Tibial artery (tissue), 4 donors: ENCODE measurements at regions of chr10 and their contacts with region 1.

Region 1: GRCh38 chr10:54444170-54444569 is 356.9 kb downstream of the PCDH15 start:
- DNase-seq: no peak
- H3K4me3 ChIP-seq: no peak overlapping the region
- H3K27ac ChIP-seq: no peak overlapping the region
- H3K4me1 ChIP-seq: no peaks in the 10 kb centered on the region
- H3K27me3 ChIP-seq: no peaks in the 10 kb centered on the region
- CTCF ChIP-seq: no peak

Region 2: DNA sequence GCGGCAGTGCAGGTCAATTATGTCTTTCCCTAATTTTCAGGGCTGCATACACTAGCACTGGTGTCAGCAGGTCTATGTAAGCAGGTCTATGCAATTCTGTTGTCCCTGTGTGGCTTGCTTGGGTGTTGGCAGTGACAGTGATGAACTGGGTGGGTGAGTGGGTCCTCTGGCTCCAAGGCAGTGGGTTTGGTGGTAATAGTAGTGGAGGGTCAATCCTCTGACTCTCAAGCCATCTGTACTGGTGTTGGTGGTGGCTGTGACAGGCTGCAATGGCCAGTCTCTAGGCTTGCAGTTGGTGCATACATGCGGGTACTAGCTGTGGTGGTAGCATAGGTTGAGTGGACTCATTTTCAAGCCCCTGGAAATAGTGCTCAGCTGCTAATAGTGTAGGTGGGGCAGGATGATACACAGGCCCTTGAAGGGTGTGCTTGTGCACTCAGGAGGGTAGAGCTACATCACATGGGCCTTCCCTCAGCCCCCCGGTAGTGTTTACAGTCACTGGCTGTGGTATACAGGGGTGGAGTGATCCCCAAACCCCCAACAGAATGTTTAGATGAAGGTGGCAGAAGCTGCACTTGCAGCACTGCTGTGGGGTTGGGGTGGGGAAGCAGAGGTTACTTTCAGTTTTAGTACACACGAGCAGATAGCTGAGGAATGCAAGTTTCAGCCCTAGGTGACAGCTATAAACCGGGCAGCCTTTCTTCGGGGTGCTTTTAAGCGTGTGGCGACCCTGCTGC is 25.6 kb after region 1 on chr10:
- intact Hi-C with region 1: loop called (anchors 2 kb)
- DNase-seq: no peak
- H3K4me3 ChIP-seq: no peak overlapping the region
- H3K27ac ChIP-seq: no peak overlapping the region
- H3K4me1 ChIP-seq: no peaks in the 10 kb centered on the region
- H3K27me3 ChIP-seq: no peaks in the 10 kb centered on the region
- CTCF ChIP-seq: no peak